ENCODE measurements at regions of chr1 and their contacts with region 1.

Region 1: GRCh38 chr1:203843435-203843834 is 18.0 kb upstream of the SNRPE start:
- DNase-seq: no peak
- ATAC-seq: no peak
- H3K4me3 ChIP-seq: no peak overlapping the region
- H3K4me3 Mint-ChIP-seq: no peak overlapping the region
- H3K27ac ChIP-seq: no peak overlapping the region
- H3K27ac Mint-ChIP-seq: no peak overlapping the region
- H3K4me1 ChIP-seq: no peaks in the 10 kb centered on the region
- H3K4me1 Mint-ChIP-seq: no peaks in the 10 kb centered on the region
- H3K27me3 ChIP-seq: no peaks in the 10 kb centered on the region
- H3K27me3 Mint-ChIP-seq: no peaks in the 10 kb centered on the region

Region 2: GRCh38 chr1:202405928-202406327 is 1437.5 kb before region 1 on chr1:
- CTCF ChIA-PET with region 1: no interaction called
- POLR2A ChIA-PET with region 1: no interaction called
- DNase-seq: no peak
- ATAC-seq: no peak
- H3K4me3 ChIP-seq: no peak overlapping the region
- H3K4me3 Mint-ChIP-seq: no peak overlapping the region
- H3K27ac ChIP-seq: no peak overlapping the region
- H3K27ac Mint-ChIP-seq: no peak overlapping the region
- H3K4me1 ChIP-seq: no peaks in the 10 kb centered on the region
- H3K4me1 Mint-ChIP-seq: peaks cover 0 to 16% (median 9%) of the 10 kb centered on the region in 3 donors
- H3K27me3 ChIP-seq: no peaks in the 10 kb centered on the region
- H3K27me3 Mint-ChIP-seq: no peaks in the 10 kb centered on the region

Region 3: GRCh38 chr1:202976633-202977032 is 866.8 kb before region 1 on chr1:
- CTCF ChIA-PET with region 1: no interaction called
- POLR2A ChIA-PET with region 1: interaction called in 1 of 2 experiments, 10 read pairs
- DNase-seq: no peak
- ATAC-seq: no peak
- H3K4me3 ChIP-seq: no peak overlapping the region
- H3K4me3 Mint-ChIP-seq: no peak overlapping the region
- H3K27ac ChIP-seq: no peak overlapping the region
- H3K27ac Mint-ChIP-seq: no peak overlapping the region
- H3K4me1 ChIP-seq: no peaks in the 10 kb centered on the region
- H3K4me1 Mint-ChIP-seq: no peaks in the 10 kb centered on the region
- H3K27me3 ChIP-seq: peaks cover 0 to 10% of the 10 kb centered on the region in 2 experiments
- H3K27me3 Mint-ChIP-seq: peaks cover 29 to 32% of the 10 kb centered on the region in 2 donors

Region 4: DNA sequence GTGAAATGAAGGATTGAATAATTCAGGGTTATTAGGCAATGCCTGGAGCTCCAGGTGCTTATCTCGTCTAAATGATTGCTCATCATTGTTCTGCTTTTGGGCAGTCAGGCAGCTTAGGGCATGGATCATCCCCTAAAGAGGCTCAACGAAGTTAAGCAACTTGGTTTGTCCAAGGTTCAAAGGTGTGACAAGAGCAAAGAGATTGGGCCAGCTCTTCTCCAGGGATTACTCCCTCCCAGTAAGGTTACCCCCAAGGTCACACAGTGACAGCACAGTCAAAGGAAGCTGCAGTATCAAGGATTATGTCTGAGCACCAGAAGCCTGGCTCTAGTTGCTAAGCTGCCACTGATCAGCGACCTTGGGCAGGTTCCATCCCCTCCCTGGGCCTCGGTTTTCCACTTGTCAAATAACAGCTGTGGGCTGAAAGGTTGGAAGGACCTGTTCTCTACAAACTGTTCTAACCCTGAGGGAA is 301.6 kb after region 1 on chr1:
- CTCF ChIA-PET with region 1: no interaction called
- POLR2A ChIA-PET with region 1: no interaction called
- DNase-seq: no peak
- ATAC-seq: no peak
- H3K4me3 ChIP-seq: no peak overlapping the region
- H3K4me3 Mint-ChIP-seq: no peak overlapping the region
- H3K27ac ChIP-seq: no peak overlapping the region
- H3K27ac Mint-ChIP-seq: no peak overlapping the region
- H3K4me1 ChIP-seq: no peaks in the 10 kb centered on the region
- H3K4me1 Mint-ChIP-seq: peaks cover 0 to 2% (median 1%) of the 10 kb centered on the region in 3 donors
- H3K27me3 ChIP-seq: peaks cover 0 to under 1% of the 10 kb centered on the region in 2 experiments
- H3K27me3 Mint-ChIP-seq: peaks cover 0 to under 1% of the 10 kb centered on the region in 2 donors